ENCODE measurements at regions of chr2 and their contacts with region 1.

Region 1: GRCh38 chr2:105853356-105854132 is 108.8 kb downstream of the NCK2 start:
- DNase-seq: no peak
- ATAC-seq: no peak
- H3K4me3 ChIP-seq: no peak overlapping the region
- H3K27ac ChIP-seq: no peak overlapping the region
- H3K4me1 ChIP-seq: no peaks in the 10 kb centered on the region
- H3K27me3 ChIP-seq: no peaks in the 10 kb centered on the region
- CTCF ChIP-seq: no peak
- EP300 ChIP-seq: no peak
- POLR2A ChIP-seq: no peak
- RAD21 ChIP-seq: no peak

Region 2: DNA sequence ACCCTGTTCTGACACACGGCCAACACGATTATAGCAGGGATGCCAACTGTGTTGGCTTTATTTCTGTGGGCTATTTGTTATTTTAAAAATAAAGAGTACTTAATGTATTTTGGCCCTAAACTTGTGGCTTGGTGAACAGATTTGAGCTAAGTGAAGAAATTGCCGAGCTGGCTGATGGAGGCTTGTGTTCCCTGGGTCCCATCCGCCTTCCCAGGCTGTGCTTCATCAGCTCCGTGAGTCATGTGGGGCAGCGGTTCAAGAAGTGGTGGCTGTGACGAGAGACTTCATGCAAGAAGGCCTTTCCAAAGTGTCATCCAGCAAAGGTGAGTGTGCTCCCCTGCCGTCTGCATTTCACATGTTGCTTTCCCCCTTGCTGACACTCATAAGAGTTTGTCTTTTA is 182.4 kb before region 1 on chr2:
- CTCF ChIA-PET with region 1: no interaction called
- POLR2A ChIA-PET with region 1: no interaction called
- in situ Hi-C with region 1: no loop called
- intact Hi-C with region 1: no loop called
- DNase-seq: no peak
- ATAC-seq: no peak
- H3K4me3 ChIP-seq: no peak overlapping the region
- H3K27ac ChIP-seq: no peak overlapping the region
- H3K4me1 ChIP-seq: peaks cover 5 to 9% of the 10 kb centered on the region in 2 experiments; a peak in 4 of 5 replicates
- H3K27me3 ChIP-seq: no peaks in the 10 kb centered on the region
- CTCF ChIP-seq: no peak
- EP300 ChIP-seq: no peak
- POLR2A ChIP-seq: no peak
- RAD21 ChIP-seq: no peak

Region 3: DNA sequence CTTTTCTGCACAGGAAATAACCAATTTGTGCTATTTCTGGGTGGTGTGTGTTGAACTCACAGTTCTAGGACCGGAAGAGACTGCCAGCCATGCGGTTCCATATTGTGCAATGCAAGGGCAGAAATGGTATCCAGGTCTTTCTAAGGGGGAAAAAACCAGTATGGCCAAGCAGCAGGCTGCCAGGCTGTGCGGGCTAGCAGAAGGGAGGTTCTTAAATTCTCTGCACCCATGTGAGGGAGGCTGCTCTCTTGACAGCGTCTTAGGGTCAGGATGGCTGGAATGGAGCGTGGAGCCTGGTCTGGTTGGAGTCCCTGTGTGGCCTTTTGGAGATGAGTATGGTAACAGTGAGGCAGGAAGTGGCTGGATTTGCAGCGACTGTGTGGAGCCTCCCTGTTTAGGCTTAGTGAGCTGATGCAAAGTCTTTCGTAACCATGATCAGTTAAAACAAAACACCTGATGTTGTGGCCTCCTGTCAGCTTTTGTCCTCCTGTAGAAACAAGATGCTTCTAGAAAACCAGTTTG is 56.2 kb before region 1 on chr2:
- CTCF ChIA-PET with region 1: no interaction called
- POLR2A ChIA-PET with region 1: no interaction called
- in situ Hi-C with region 1: no loop called
- intact Hi-C with region 1: loop called (anchors 5 kb)
- DNase-seq: peak in 1 of 4 experiments; percentile 62
- ATAC-seq: peak; percentile 84
- H3K4me3 ChIP-seq: no peak overlapping the region
- H3K27ac ChIP-seq: peak overlapping the region; percentile 80; the same call in 2 of the 3 replicates
- H3K4me1 ChIP-seq: peaks cover 18 to 58% of the 10 kb centered on the region in 2 experiments; a peak in 4 of 5 replicates
- H3K27me3 ChIP-seq: no peaks in the 10 kb centered on the region
- CTCF ChIP-seq: no peak
- EP300 ChIP-seq: peak; percentile 31; the same call in 1 of the 2 replicates
- POLR2A ChIP-seq: no peak; the same call in 1 of the 2 replicates
- RAD21 ChIP-seq: no peak

Measured in K562 (cell line).